ENCODE measurements at regions of chr17 and their contacts with region 1.

Region 1: DNA sequence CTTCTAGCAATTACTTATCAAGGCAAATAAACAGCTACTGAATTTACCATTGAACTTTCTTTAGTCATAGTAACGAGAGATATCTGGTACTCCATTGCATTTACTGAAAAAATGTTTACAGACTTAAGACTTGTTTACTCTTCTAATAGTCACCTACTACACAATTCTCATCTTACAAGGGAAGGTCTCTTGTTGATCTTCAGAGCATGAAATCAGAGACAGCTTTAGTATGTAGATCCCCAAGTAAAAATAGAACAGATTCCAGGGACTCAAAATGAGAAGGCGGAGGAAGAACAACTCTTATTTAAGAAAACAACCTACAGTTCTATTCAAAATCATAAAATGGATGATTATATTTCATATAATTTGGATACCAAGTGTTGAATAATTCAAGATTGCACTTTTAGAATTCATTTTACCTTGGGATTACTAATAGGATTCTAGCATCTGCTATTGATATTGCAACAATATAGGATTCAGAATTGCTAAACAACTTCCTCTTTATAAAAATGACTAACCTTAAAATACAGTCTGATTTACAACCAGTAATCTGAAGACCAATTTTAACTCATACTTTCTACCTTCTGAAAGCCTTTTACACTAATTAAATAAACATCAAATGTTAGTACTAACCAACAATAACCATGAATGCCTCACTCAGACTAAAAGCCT is 20.8 kb downstream of the UBE2G1 start:
- DNase-seq: no peak
- ATAC-seq: no peak
- H3K4me3 ChIP-seq: no peak overlapping the region
- H3K4me3 Mint-ChIP-seq: no peak overlapping the region
- H3K27ac ChIP-seq: no peak overlapping the region
- H3K27ac Mint-ChIP-seq: no peak overlapping the region
- H3K4me1 ChIP-seq: peaks cover 2 to 19% of the 10 kb centered on the region in 2 experiments
- H3K4me1 Mint-ChIP-seq: peaks cover 26 to 39% (median 29%) of the 10 kb centered on the region in 3 donors
- H3K27me3 ChIP-seq: no peaks in the 10 kb centered on the region
- H3K27me3 Mint-ChIP-seq: no peaks in the 10 kb centered on the region

Region 2: DNA sequence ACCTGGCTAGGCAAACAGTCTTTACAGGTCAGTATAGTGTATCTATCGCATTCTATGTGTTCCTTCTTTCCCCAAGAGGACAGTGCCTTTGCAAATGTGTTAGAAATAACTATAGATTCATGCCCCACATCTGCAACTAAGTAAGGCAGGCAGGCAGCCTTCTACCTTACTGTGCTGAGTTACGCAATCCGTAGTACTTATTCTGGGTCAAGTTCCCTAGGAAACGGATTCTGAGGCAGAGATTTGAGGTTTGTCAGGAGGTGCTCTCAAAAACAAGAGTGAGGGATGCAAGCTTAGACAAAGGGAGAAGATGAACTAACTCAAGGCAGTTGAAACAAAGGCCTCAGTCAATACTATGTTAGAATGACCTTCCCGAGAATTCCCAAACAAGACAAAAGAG is 69.2 kb before region 1 on chr17:
- CTCF ChIA-PET with region 1: no interaction called
- POLR2A ChIA-PET with region 1: interaction called in 1 of 2 experiments, 10 read pairs
- DNase-seq: no peak
- ATAC-seq: no peak
- H3K4me3 ChIP-seq: no peak overlapping the region
- H3K4me3 Mint-ChIP-seq: no peak overlapping the region
- H3K27ac ChIP-seq: no peak overlapping the region
- H3K27ac Mint-ChIP-seq: peak overlapping the region in 1 of 2 donors; percentile 4
- H3K4me1 ChIP-seq: no peaks in the 10 kb centered on the region
- H3K4me1 Mint-ChIP-seq: peaks cover 0 to 7% (median 0%) of the 10 kb centered on the region in 3 donors
- H3K27me3 ChIP-seq: no peaks in the 10 kb centered on the region
- H3K27me3 Mint-ChIP-seq: no peaks in the 10 kb centered on the region

Region 3: DNA sequence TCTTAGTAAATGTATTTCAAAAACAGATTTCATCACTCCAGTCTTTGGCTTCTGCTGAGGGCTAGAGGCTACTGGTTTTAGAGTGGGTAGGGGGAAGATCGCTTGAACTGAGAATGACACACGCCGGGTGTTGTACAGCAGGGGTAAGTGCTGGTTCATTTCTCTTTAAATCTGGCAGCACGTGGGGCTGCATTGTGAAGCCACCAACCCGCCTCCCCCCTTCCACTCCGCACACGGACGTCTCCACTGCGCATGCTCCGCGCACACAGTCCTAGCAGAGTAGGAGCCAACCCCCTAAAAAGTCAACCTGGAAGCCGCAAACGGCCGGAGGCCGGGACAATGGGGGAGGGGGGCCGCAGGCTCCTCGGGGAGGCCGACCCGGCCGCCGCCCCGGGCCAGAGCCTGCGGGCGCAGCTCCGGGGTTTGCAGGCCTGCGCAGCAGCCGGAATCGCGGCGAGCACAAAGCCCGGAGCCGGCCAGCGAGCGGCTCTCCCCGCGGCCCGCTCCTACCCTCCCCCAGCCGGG is 19.4 kb after region 1 on chr17:
- CTCF ChIA-PET with region 1: interaction called in 1 of 2 experiments, 10 read pairs
- POLR2A ChIA-PET with region 1: no interaction called
- DNase-seq: peak; percentile 76 to 93 (median 82)
- ATAC-seq: peak; percentile 53 to 58 (median 57)
- H3K4me3 ChIP-seq: peak overlapping the region; percentile 62 to 74
- H3K4me3 Mint-ChIP-seq: peak overlapping the region; percentile 91 to 97 (median 91)
- H3K27ac ChIP-seq: peak overlapping the region; percentile 1
- H3K27ac Mint-ChIP-seq: peak overlapping the region; percentile 95 to 97
- H3K4me1 ChIP-seq: peaks cover 12 to 35% of the 10 kb centered on the region in 2 experiments
- H3K4me1 Mint-ChIP-seq: peaks cover 37 to 44% (median 40%) of the 10 kb centered on the region in 3 donors
- H3K27me3 ChIP-seq: no peaks in the 10 kb centered on the region
- H3K27me3 Mint-ChIP-seq: no peaks in the 10 kb centered on the region

Region 4: GRCh38 chr17:4530799-4531730 is 185.3 kb after region 1 on chr17:
- CTCF ChIA-PET with region 1: no interaction called
- POLR2A ChIA-PET with region 1: no interaction called
- DNase-seq: no peak
- ATAC-seq: no peak
- H3K4me3 ChIP-seq: no peak overlapping the region
- H3K4me3 Mint-ChIP-seq: no peak overlapping the region
- H3K27ac ChIP-seq: no peak overlapping the region
- H3K27ac Mint-ChIP-seq: no peak overlapping the region
- H3K4me1 ChIP-seq: no peaks in the 10 kb centered on the region
- H3K4me1 Mint-ChIP-seq: peaks cover 0 to 5% (median 0%) of the 10 kb centered on the region in 3 donors
- H3K27me3 ChIP-seq: peaks cover 0 to 42% of the 10 kb centered on the region in 2 experiments
- H3K27me3 Mint-ChIP-seq: peaks cover 7 to 11% of the 10 kb centered on the region in 2 donors